Activated B cell treated with CpG ODN at 0.5 μM for 24 hours (primary cell): ENCODE measurements at regions of chr22 and their contacts with region 1.

Region 1: DNA sequence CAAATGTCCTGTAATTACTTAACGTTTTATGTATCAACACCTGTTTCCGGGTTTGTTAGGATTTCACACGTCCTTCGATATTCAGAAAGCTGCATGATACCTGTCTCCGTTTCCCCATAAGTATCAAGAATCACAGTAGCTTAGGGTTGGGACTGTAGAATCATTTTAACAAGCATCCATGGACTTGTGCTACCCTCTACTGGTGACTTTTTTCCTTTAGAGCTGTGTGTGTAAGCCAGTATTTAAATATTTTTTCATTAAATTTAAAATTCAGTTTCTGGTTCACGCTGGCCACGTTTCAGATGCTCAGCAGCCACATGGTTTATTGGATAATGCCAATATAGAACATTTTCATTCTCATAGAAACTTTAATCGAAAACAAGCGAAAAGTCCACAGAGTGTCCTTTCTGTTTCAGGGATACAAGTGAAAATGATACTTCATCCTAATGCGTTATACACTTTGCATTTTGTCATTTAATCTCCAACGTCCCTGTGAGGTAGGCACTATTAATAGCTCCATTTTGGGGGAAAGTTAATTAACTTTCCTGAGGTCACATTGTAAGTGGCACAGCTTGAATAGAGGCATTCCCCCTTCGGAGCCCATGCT is 61.5 kb upstream of the SLC25A18 start:
- DNase-seq: no peak
- ATAC-seq: peak; percentile 88
- H3K4me3 Mint-ChIP-seq: no peak overlapping the region
- H3K27ac Mint-ChIP-seq: no peak overlapping the region
- H3K4me1 Mint-ChIP-seq: peaks cover 6% of the 10 kb centered on the region
- H3K27me3 Mint-ChIP-seq: no peaks in the 10 kb centered on the region
- CTCF ChIP-seq: peak; percentile 43

Region 2: GRCh38 chr22:16917144-16918003 is 584.4 kb before region 1 on chr22:
- CTCF ChIA-PET with region 1: interaction called, 20 read pairs
- POLR2A ChIA-PET with region 1: no interaction called
- intact Hi-C with region 1: loop called (anchors 1 kb)
- DNase-seq: peak; percentile 49
- ATAC-seq: peak; percentile 42
- H3K4me3 Mint-ChIP-seq: no peak overlapping the region
- H3K27ac Mint-ChIP-seq: no peak overlapping the region
- H3K4me1 Mint-ChIP-seq: peaks cover 28% of the 10 kb centered on the region
- H3K27me3 Mint-ChIP-seq: peaks cover 17% of the 10 kb centered on the region
- CTCF ChIP-seq: no peak

Region 3: GRCh38 chr22:17077255-17077654 is 424.5 kb before region 1 on chr22:
- CTCF ChIA-PET with region 1: interaction called, 38 read pairs
- POLR2A ChIA-PET with region 1: interaction called, 3 read pairs
- intact Hi-C with region 1: loop called (anchors 1 kb)
- DNase-seq: no peak
- ATAC-seq: no peak
- H3K4me3 Mint-ChIP-seq: no peak overlapping the region
- H3K27ac Mint-ChIP-seq: no peak overlapping the region
- H3K4me1 Mint-ChIP-seq: peaks cover 3% of the 10 kb centered on the region
- H3K27me3 Mint-ChIP-seq: no peaks in the 10 kb centered on the region
- CTCF ChIP-seq: no peak

Region 4: GRCh38 chr22:17158568-17159503 is 342.9 kb before region 1 on chr22 and contains the start of gene HDHD5:
- CTCF ChIA-PET with region 1: interaction called, 4 read pairs
- POLR2A ChIA-PET with region 1: no interaction called
- intact Hi-C with region 1: loop called (anchors 5 kb)
- DNase-seq: peak; percentile 82
- ATAC-seq: peak; percentile 91
- H3K4me3 Mint-ChIP-seq: peak within 1 kb of the TSS; percentile 83
- H3K27ac Mint-ChIP-seq: peak within 1 kb of the TSS; percentile 59
- H3K4me1 Mint-ChIP-seq: peaks cover 26% of the 10 kb centered on the region
- H3K27me3 Mint-ChIP-seq: no peaks in the 10 kb centered on the region
- CTCF ChIP-seq: no peak
- total RNA-seq, gene HDHD5: 23.9 and 25.2 TPM in 2 replicates

Region 5: GRCh38 chr22:17164392-17165024 is 337.3 kb before region 1 on chr22:
- CTCF ChIA-PET with region 1: interaction called, 11 read pairs
- POLR2A ChIA-PET with region 1: no interaction called
- intact Hi-C with region 1: loop called (anchors 5 kb)
- DNase-seq: no peak
- ATAC-seq: no peak
- H3K4me3 Mint-ChIP-seq: no peak overlapping the region
- H3K27ac Mint-ChIP-seq: no peak overlapping the region
- H3K4me1 Mint-ChIP-seq: peaks cover 6% of the 10 kb centered on the region
- H3K27me3 Mint-ChIP-seq: peaks cover 2% of the 10 kb centered on the region
- CTCF ChIP-seq: no peak

Region 6: DNA sequence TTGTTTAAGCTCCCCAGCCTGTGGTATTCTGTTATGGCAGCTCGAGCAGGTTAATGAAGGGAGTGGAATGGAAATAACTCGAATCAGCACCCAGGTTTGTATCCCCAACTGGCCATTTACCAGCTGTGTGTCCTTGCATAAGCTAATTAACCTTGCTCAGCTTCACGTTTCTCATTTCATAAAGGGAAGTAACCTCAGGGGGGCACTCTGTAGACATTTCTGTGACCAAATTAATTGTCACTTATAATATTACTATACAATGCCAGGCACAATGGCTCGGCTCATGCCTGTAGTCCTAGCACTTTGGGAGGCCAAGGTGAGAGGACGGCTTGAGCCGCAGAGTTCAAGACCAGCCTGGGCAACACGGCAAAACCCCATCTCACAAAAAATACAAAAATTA is 296.4 kb before region 1 on chr22:
- CTCF ChIA-PET with region 1: interaction called, 86 read pairs
- POLR2A ChIA-PET with region 1: interaction called, 4 read pairs
- intact Hi-C with region 1: loop called (anchors 1 kb)
- DNase-seq: no peak
- ATAC-seq: peak; percentile 66
- H3K4me3 Mint-ChIP-seq: no peak overlapping the region
- H3K27ac Mint-ChIP-seq: peak overlapping the region; percentile 56
- H3K4me1 Mint-ChIP-seq: no peaks in the 10 kb centered on the region
- H3K27me3 Mint-ChIP-seq: no peaks in the 10 kb centered on the region
- CTCF ChIP-seq: no peak

Region 7: GRCh38 chr22:17368554-17369438 is 133.0 kb before region 1 on chr22:
- CTCF ChIA-PET with region 1: interaction called, 5 read pairs
- POLR2A ChIA-PET with region 1: interaction called, 4 read pairs
- intact Hi-C with region 1: loop called (anchors 5 kb)
- DNase-seq: peak; percentile 44
- ATAC-seq: peak; percentile 56
- H3K4me3 Mint-ChIP-seq: peak overlapping the region; percentile 80
- H3K27ac Mint-ChIP-seq: peak overlapping the region; percentile 10
- H3K4me1 Mint-ChIP-seq: peaks cover 27% of the 10 kb centered on the region
- H3K27me3 Mint-ChIP-seq: peaks cover 39% of the 10 kb centered on the region
- CTCF ChIP-seq: no peak

Region 8: GRCh38 chr22:17628304-17629166 is 126.8 kb after region 1 on chr22 and contains the start of gene ATP6V1E1:
- CTCF ChIA-PET with region 1: no interaction called
- POLR2A ChIA-PET with region 1: no interaction called
- intact Hi-C with region 1: no loop called
- DNase-seq: peak; percentile 94
- ATAC-seq: peak; percentile 100
- H3K4me3 Mint-ChIP-seq: peak within 1 kb of the TSS; percentile 98
- H3K27ac Mint-ChIP-seq: peak within 1 kb of the TSS; percentile 97
- H3K4me1 Mint-ChIP-seq: peaks cover 32% of the 10 kb centered on the region
- H3K27me3 Mint-ChIP-seq: no peaks in the 10 kb centered on the region
- CTCF ChIP-seq: no peak
- total RNA-seq, gene ATP6V1E1: 73.9 and 74.0 TPM in 2 replicates

Region 9: GRCh38 chr22:17665854-17666253 is 164.1 kb after region 1 on chr22:
- CTCF ChIA-PET with region 1: no interaction called
- POLR2A ChIA-PET with region 1: no interaction called
- intact Hi-C with region 1: no loop called
- DNase-seq: no peak
- ATAC-seq: no peak
- H3K4me3 Mint-ChIP-seq: no peak overlapping the region
- H3K27ac Mint-ChIP-seq: no peak overlapping the region
- H3K4me1 Mint-ChIP-seq: peaks cover 12% of the 10 kb centered on the region
- H3K27me3 Mint-ChIP-seq: no peaks in the 10 kb centered on the region
- CTCF ChIP-seq: no peak